ENCODE measurements at regions of chr9 and their contacts with region 1.

Region 1: GRCh38 chr9:98263482-98264357 is 8.3 kb upstream of the TBC1D2 start:
- DNase-seq: peak; percentile 76 to 94
- H3K4me3 ChIP-seq: no peak overlapping the region
- CTCF ChIP-seq: peak in 1 of 3 donors; percentile 76
- POLR2A ChIP-seq: no peak

Region 2: GRCh38 chr9:97307091-97307490 is 956.6 kb before region 1 on chr9:
- intact Hi-C with region 1: no loop called
- DNase-seq: peak in 1 of 2 donors; percentile 36
- H3K4me3 ChIP-seq: no peak overlapping the region
- CTCF ChIP-seq: no peak
- POLR2A ChIP-seq: no peak

Region 3: DNA sequence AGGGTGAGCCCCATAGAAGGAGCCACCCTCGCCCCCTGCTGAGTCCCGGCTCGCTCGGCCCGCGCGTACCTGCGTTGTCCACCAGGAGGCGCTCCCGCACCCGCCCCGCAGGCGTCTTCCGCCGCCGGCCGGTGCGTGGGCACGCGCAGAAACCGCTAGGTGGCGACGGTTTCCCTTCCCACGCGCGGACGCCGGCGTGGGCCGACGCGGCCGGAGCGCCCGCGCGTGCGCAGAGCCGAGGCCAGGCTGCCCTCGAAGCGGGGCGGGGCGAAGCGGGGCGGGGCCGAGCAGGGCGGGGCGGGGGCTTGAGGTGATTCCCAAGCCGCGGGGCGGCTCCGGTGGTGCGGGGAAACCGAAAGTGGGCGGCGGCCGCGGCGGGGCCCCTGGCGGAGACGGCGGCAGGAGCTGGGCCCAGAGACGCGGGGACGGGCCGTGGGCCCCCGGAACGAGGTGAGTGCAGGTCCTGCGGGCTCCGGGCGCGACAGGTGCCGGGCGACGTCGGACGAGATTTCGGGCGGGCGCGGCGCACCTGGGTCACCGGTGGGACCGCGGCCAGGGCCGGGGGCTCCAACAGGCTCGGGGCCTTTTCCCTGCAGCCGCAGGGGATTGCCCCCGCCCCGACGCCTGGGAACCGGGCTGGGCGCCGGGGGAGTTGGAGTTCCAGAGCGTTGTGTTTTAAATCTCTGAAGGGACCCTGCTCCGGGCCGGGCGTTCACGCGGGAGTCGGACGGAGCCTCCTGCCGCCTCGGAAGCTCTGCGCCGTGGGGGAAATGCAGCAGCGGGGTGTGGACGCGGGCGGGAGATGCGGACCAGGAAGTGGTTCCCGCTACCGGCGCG is 851.7 kb before region 1 on chr9 and contains the start of gene TDRD7:
- intact Hi-C with region 1: no loop called
- DNase-seq: peak; percentile 71 to 96
- H3K4me3 ChIP-seq: peak within 1 kb of the TSS; percentile 93
- CTCF ChIP-seq: peak in 2 of 3 donors; percentile 43 to 82
- POLR2A ChIP-seq: no peak
- total RNA-seq, gene TDRD7: 3.6 to 8.2 (median 6.4) TPM

Region 4: GRCh38 chr9:98045234-98046179 is 218.2 kb before region 1 on chr9:
- intact Hi-C with region 1: no loop called
- DNase-seq: no peak
- H3K4me3 ChIP-seq: no peak overlapping the region
- CTCF ChIP-seq: no peak
- POLR2A ChIP-seq: no peak

Region 5: GRCh38 chr9:98118640-98119601 is 144.8 kb before region 1 on chr9 and contains the start of gene TRIM14:
- intact Hi-C with region 1: loop called (anchors 5 kb)
- DNase-seq: no peak
- H3K4me3 ChIP-seq: peak within 1 kb of the TSS; percentile 56
- CTCF ChIP-seq: no peak
- POLR2A ChIP-seq: no peak
- total RNA-seq, gene TRIM14: 12.0 to 17.5 (median 16.3) TPM

Region 6: DNA sequence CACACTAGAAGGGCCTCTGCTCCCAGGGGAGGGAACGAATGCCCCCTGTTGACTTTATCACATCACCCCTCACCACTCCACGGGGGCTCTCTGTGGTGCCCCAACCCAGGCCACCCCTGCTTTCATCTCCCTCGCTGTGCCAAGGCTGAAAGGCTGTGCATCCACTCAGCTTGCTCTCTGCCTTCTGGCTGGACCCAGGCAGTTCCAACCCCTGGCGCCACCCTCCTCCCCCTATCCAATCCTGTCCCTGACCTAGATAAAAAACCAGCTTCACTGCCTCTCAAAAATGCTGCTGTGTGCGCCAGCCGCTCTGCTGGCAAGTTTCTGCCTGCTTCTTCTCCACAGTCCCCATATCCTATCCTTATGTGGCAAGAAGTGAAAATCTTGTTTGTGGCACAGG is 48.9 kb before region 1 on chr9:
- intact Hi-C with region 1: loop called (anchors 5 kb)
- DNase-seq: peak in 1 of 2 donors; percentile 44
- H3K4me3 ChIP-seq: no peak overlapping the region
- CTCF ChIP-seq: no peak
- POLR2A ChIP-seq: no peak

Measured in lower leg skin (tissue), 4 donors.